ENCODE measurements at regions of chr18 and their contacts with region 1.

Region 1: GRCh38 chr18:55790296-55790695 is 202.3 kb upstream of the TCF4 start:
- DNase-seq: no peak
- ATAC-seq: no peak
- H3K4me3 ChIP-seq: no peak overlapping the region
- H3K4me3 Mint-ChIP-seq: no peak overlapping the region
- H3K27ac ChIP-seq: no peak overlapping the region
- H3K27ac Mint-ChIP-seq: no peak overlapping the region
- H3K4me1 ChIP-seq: no peaks in the 10 kb centered on the region
- H3K4me1 Mint-ChIP-seq: no peaks in the 10 kb centered on the region
- H3K27me3 ChIP-seq: no peaks in the 10 kb centered on the region
- H3K27me3 Mint-ChIP-seq: no peaks in the 10 kb centered on the region
- CTCF ChIP-seq: no peak

Region 2: GRCh38 chr18:55731594-55732042 is 58.7 kb before region 1 on chr18:
- CTCF ChIA-PET with region 1: no interaction called
- POLR2A ChIA-PET with region 1: no interaction called
- intact Hi-C with region 1: loop called in 1 of 2 experiments (anchors 10 kb)
- DNase-seq: no peak
- ATAC-seq: no peak
- H3K4me3 ChIP-seq: no peak overlapping the region
- H3K4me3 Mint-ChIP-seq: no peak overlapping the region
- H3K27ac ChIP-seq: no peak overlapping the region
- H3K27ac Mint-ChIP-seq: no peak overlapping the region
- H3K4me1 ChIP-seq: no peaks in the 10 kb centered on the region
- H3K4me1 Mint-ChIP-seq: no peaks in the 10 kb centered on the region
- H3K27me3 ChIP-seq: no peaks in the 10 kb centered on the region
- H3K27me3 Mint-ChIP-seq: no peaks in the 10 kb centered on the region
- CTCF ChIP-seq: no peak

Region 3: GRCh38 chr18:55856229-55856628 is 65.9 kb after region 1 on chr18:
- CTCF ChIA-PET with region 1: no interaction called
- POLR2A ChIA-PET with region 1: no interaction called
- intact Hi-C with region 1: no loop called
- DNase-seq: no peak
- ATAC-seq: no peak
- H3K4me3 ChIP-seq: no peak overlapping the region
- H3K4me3 Mint-ChIP-seq: no peak overlapping the region
- H3K27ac ChIP-seq: no peak overlapping the region
- H3K27ac Mint-ChIP-seq: no peak overlapping the region
- H3K4me1 ChIP-seq: no peaks in the 10 kb centered on the region
- H3K4me1 Mint-ChIP-seq: no peaks in the 10 kb centered on the region
- H3K27me3 ChIP-seq: no peaks in the 10 kb centered on the region
- H3K27me3 Mint-ChIP-seq: no peaks in the 10 kb centered on the region
- CTCF ChIP-seq: no peak

Measured in CD4-positive, alpha-beta T cell (primary cell).